ENCODE measurements at regions of chr14 and their contacts with region 1.

Region 1: DNA sequence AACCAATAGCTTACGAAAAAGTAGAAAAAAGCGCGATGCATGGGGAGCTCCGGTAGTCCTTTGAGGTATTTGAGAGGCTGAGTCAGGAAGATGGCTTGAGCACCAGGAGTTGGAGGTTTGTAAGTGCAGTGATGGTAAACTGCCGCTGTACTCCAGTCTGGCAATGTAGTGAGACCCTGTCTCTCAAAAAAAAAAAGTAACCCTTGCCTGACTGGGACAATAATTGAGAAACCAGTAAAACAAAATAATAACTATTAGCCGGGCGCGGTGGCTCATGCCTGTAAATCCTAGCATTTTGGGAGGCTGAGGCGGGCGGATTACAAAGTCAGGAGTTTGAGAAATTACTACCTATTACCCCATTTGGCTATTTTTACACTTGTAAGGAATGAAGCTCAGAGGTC is 632 bp upstream of the ACOT2 start:
- DNase-seq: no peak
- H3K4me3 ChIP-seq: peak overlapping the region; percentile 50
- CTCF ChIP-seq: no peak

Region 2: DNA sequence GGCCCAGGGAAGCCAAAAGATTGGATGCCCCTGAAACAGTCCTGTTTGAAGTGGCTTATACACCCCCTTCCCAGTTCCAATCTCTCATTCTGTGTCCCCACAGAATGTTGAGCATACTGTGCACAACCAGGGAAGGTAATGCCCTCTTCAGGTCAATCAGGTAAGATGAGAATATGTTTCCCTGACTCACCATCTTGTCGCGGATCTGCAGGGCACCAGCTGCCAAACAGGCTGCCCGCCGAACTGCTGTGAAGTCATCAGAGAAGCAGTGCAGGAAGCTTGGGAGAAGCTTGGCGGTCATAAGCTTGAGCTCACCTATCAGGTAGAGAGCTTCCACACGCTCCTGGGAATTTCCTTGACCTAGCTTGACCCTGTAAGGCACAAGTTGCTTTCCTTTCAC is 68.0 kb before region 1 on chr14:
- in situ Hi-C with region 1: no loop called
- DNase-seq: no peak
- H3K4me3 ChIP-seq: no peak overlapping the region
- CTCF ChIP-seq: no peak

Region 3: GRCh38 chr14:73524493-73524892 is 43.9 kb before region 1 on chr14:
- in situ Hi-C with region 1: loop called (anchors 5 kb)
- DNase-seq: no peak
- H3K4me3 ChIP-seq: no peak overlapping the region
- CTCF ChIP-seq: no peak

Region 4: GRCh38 chr14:73627151-73627558 is 58.8 kb after region 1 on chr14:
- in situ Hi-C with region 1: no loop called
- DNase-seq: no peak
- H3K4me3 ChIP-seq: no peak overlapping the region
- CTCF ChIP-seq: no peak

Region 5: DNA sequence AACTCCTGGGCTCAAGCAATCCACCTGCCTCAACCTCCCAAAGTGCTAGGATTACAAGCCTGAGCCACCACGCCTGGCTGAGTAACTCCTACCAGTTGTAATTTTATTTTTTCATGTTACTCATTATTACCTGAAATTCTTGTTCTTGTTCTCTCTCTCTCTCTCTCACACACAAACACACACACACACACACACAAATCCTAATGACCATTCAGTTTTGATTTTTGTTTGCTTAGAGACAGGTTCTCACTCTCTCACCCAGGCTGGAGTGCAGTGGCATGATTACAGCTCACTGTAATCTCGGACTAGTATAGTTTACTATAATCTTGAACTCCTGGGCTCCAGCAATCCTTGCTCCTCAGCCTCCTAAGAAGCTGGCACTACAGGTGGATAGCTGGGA is 106.7 kb after region 1 on chr14:
- in situ Hi-C with region 1: loop called (anchors 5 kb)
- DNase-seq: no peak
- H3K4me3 ChIP-seq: no peak overlapping the region
- CTCF ChIP-seq: no peak

Region 6: DNA sequence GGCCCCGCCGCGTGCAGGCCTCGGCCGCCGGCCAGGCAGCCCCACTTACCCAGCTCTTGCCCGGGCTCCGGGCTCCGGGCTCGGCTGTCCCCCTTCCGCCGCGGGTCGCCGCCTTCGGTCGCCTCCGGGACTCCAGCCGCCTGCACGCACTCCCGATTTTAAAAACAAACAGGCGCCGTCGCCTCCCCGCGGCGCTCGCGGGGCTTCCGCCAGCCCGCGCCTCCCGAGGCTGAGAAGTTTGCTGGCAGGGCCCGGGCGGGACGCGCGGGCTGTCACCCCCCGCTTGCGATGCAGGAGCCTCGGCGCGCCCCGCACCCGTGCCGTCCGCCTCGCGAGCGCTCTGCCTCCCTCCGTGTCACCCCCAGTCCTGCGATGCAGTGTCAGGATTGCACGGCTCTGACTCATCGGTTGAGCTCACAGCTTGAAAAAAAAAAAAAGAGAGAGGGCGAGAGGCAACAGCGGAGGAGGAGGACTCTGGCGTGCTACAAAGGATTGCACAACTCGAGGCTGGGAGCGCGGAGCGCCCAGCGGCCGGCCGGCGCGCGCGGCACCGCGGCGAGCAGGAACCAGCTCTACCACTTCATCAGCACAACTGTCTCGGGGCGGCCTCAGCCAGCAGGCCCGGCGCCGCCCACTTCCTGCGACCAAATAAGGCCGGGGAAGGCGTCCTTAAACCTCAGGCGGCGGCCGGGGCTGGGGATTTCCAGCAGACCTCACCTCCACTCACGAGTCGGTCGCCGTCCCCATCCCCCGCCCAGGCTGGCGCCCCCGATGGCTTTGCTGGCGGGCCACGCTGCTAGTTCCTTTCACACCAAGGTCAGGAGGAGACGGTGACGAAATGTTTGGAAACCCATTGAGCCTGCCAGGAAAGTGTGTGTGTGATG is 191.6 kb after region 1 on chr14:
- in situ Hi-C with region 1: no loop called
- DNase-seq: peak; percentile 95
- H3K4me3 ChIP-seq: peak overlapping the region; percentile 70
- CTCF ChIP-seq: no peak